PC-9 (cell line): ENCODE measurements at regions of chr15 and their contacts with region 1.

Region 1: GRCh38 chr15:65576664-65577063 is 34.3 kb downstream of the INTS14 start:
- DNase-seq: no peak
- H3K4me3 ChIP-seq: no peak overlapping the region
- H3K27ac ChIP-seq: no peak overlapping the region
- H3K4me1 ChIP-seq: no peaks in the 10 kb centered on the region
- H3K27me3 ChIP-seq: no peaks in the 10 kb centered on the region
- CTCF ChIP-seq: no peak

Region 2: GRCh38 chr15:65258375-65259262 is 318.0 kb before region 1 on chr15:
- CTCF ChIA-PET with region 1: no interaction called
- POLR2A ChIA-PET with region 1: no interaction called
- intact Hi-C with region 1: no loop called
- DNase-seq: no peak
- H3K4me3 ChIP-seq: no peak overlapping the region
- H3K27ac ChIP-seq: no peak overlapping the region
- H3K4me1 ChIP-seq: no peaks in the 10 kb centered on the region
- H3K27me3 ChIP-seq: no peaks in the 10 kb centered on the region
- CTCF ChIP-seq: no peak

Region 3: GRCh38 chr15:65509321-65509720 is 67.3 kb before region 1 on chr15:
- CTCF ChIA-PET with region 1: no interaction called
- POLR2A ChIA-PET with region 1: no interaction called
- intact Hi-C with region 1: loop called (anchors 10 kb)
- DNase-seq: no peak
- H3K4me3 ChIP-seq: no peak overlapping the region
- H3K27ac ChIP-seq: no peak overlapping the region
- H3K4me1 ChIP-seq: no peaks in the 10 kb centered on the region
- H3K27me3 ChIP-seq: no peaks in the 10 kb centered on the region
- CTCF ChIP-seq: no peak

Region 4: GRCh38 chr15:65757256-65757655 is 180.6 kb after region 1 on chr15:
- CTCF ChIA-PET with region 1: no interaction called
- POLR2A ChIA-PET with region 1: no interaction called
- intact Hi-C with region 1: no loop called
- DNase-seq: no peak
- H3K4me3 ChIP-seq: no peak overlapping the region
- H3K27ac ChIP-seq: no peak overlapping the region
- H3K4me1 ChIP-seq: no peaks in the 10 kb centered on the region
- H3K27me3 ChIP-seq: no peaks in the 10 kb centered on the region
- CTCF ChIP-seq: no peak